ENCODE measurements at regions of chrX and their contacts with region 1.

Region 1: DNA sequence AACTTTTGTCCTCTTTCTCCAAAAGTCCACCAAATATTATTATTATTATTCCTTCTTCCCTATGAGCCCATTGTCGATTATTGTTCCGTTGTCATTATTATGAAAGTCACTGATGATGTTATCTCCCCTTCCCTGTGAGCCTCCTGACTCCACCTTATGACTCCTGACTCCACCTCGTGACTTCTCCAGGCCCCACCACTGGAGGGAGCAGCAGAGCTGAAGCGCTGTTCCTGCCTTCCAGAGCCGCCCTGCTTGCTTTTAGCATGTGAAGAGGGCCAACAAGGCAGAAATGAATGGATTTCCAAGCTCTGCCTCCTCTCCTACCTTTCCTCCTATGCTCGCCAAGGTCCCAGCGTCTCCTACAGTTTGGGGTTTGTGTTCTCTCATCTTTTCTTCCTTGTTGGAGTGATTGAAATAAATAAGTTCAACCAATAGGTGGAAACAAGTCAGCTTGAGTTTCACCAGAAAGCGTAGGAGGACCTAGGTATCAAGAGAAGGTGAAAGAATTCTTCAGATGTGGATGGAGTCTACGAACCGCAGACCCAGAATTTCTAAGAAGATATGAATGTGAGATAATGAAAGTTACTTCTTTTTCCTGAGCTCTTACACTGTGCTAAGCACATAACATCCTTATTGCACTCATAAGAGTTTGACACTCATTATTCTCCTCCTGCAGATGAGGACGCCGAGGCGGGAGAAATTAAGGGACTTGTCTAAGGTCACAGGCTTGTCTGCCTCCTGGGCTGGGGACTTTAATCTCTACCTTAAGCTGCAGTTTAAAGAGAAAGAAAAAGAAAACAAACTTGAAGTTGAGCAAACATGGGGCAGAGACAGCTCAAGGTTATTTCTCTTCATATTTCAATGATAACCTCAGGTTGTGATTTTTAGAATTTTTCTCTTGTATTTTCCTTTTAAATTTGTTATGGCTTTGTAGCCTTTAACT is 26.1 kb downstream of the IGSF1 start:
- DNase-seq: peak in 1 of 2 experiments; percentile 78
- H3K4me3 ChIP-seq: no peak overlapping the region
- H3K27ac ChIP-seq: no peak overlapping the region
- H3K4me1 ChIP-seq: no peaks in the 10 kb centered on the region
- H3K27me3 ChIP-seq: no peaks in the 10 kb centered on the region
- CTCF ChIP-seq: peak; percentile 69 to 73 (median 70)
- EP300 ChIP-seq: no peak
- POLR2A ChIP-seq: no peak
- RAD21 ChIP-seq: peak; percentile 82 to 84

Region 2: DNA sequence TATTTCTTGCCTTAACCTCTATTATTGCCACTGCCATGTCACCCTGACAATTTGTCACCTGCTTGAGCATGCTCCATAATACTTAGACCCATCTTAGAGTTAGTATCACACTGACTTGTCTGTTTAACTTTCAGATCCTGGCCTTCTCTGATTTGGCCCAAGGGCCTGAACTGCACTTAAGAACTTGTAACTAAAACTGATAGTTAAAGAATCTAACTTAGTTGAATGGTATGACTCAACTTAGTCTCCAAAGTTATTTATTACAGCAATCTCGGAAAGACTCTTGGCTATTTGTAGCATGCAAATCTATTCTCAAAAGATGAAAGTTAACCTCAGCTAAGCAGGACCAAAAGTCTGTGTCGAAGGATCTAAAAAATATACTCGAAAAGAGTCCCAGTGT is 46.2 kb before region 1 on chrX:
- CTCF ChIA-PET with region 1: no interaction called
- POLR2A ChIA-PET with region 1: no interaction called
- DNase-seq: no peak
- H3K4me3 ChIP-seq: no peak overlapping the region
- H3K27ac ChIP-seq: no peak overlapping the region
- H3K4me1 ChIP-seq: peaks cover 0 to 7% (median under 1%) of the 10 kb centered on the region in 4 experiments; a peak in 1 of 7 replicates
- H3K27me3 ChIP-seq: no peaks in the 10 kb centered on the region
- CTCF ChIP-seq: no peak
- EP300 ChIP-seq: no peak
- POLR2A ChIP-seq: no peak
- RAD21 ChIP-seq: no peak

Region 3: GRCh38 chrX:131237363-131237762 is 25.6 kb before region 1 on chrX:
- CTCF ChIA-PET with region 1: interaction called, 13 read pairs
- POLR2A ChIA-PET with region 1: no interaction called
- DNase-seq: no peak
- H3K4me3 ChIP-seq: no peak overlapping the region
- H3K27ac ChIP-seq: no peak overlapping the region
- H3K4me1 ChIP-seq: no peaks in the 10 kb centered on the region
- H3K27me3 ChIP-seq: no peaks in the 10 kb centered on the region
- CTCF ChIP-seq: peak in 1 of 3 experiments; percentile 30; a peak in 1 of 4 replicates
- EP300 ChIP-seq: no peak
- POLR2A ChIP-seq: no peak
- RAD21 ChIP-seq: peak in 1 of 2 experiments; percentile 14; a peak in 1 of 4 replicates

Region 4: GRCh38 chrX:131277547-131278136 is 14.6 kb after region 1 on chrX:
- CTCF ChIA-PET with region 1: interaction called, 19 read pairs
- POLR2A ChIA-PET with region 1: interaction called, 4 read pairs
- DNase-seq: no peak
- H3K4me3 ChIP-seq: no peak overlapping the region
- H3K27ac ChIP-seq: no peak overlapping the region
- H3K4me1 ChIP-seq: peaks cover 0 to 20% (median 2%) of the 10 kb centered on the region in 4 experiments; a peak in 4 of 7 replicates
- H3K27me3 ChIP-seq: no peaks in the 10 kb centered on the region
- CTCF ChIP-seq: no peak
- EP300 ChIP-seq: no peak
- POLR2A ChIP-seq: no peak
- RAD21 ChIP-seq: no peak

Region 5: GRCh38 chrX:131331152-131331551 is 68.1 kb after region 1 on chrX:
- CTCF ChIA-PET with region 1: interaction called, 10 read pairs
- POLR2A ChIA-PET with region 1: no interaction called
- DNase-seq: no peak
- H3K4me3 ChIP-seq: no peak overlapping the region
- H3K27ac ChIP-seq: no peak overlapping the region
- H3K4me1 ChIP-seq: no peaks in the 10 kb centered on the region
- H3K27me3 ChIP-seq: no peaks in the 10 kb centered on the region
- CTCF ChIP-seq: peak in 2 of 3 experiments; percentile 28 to 29; a peak in 2 of 4 replicates
- EP300 ChIP-seq: no peak
- POLR2A ChIP-seq: no peak
- RAD21 ChIP-seq: peak; percentile 28 to 55; a peak in 3 of 4 replicates

Region 6: GRCh38 chrX:131366407-131366806 is 103.4 kb after region 1 on chrX:
- CTCF ChIA-PET with region 1: interaction called, 27 read pairs
- POLR2A ChIA-PET with region 1: no interaction called
- DNase-seq: no peak
- H3K4me3 ChIP-seq: no peak overlapping the region
- H3K27ac ChIP-seq: no peak overlapping the region
- H3K4me1 ChIP-seq: peaks cover 0 to 15% (median 5%) of the 10 kb centered on the region in 4 experiments; a peak in 3 of 7 replicates
- H3K27me3 ChIP-seq: no peaks in the 10 kb centered on the region
- CTCF ChIP-seq: peak in 2 of 3 experiments; percentile 14 to 15; a peak in 2 of 4 replicates
- EP300 ChIP-seq: no peak
- POLR2A ChIP-seq: no peak
- RAD21 ChIP-seq: peak; percentile 25 to 46; a peak in 3 of 4 replicates

Region 7: DNA sequence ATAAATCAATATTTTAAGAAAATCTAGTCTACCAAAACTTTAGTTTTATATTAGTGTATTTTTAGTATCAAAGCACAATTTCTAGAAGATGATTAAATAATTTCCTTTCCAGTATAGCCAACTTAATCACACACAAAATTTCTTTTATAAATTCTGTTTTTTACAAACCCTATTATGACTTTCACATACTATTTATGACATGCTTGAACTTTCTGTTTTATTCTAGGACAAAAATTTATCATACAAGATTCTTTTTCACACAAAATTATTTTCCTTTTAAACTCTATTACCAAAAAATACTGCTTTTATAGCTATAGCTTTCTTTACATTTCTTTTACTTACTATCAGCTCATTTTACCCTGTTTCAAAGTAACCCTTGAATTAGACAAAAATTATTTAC is 430.4 kb after region 1 on chrX:
- CTCF ChIA-PET with region 1: no interaction called
- POLR2A ChIA-PET with region 1: no interaction called
- DNase-seq: no peak
- H3K4me3 ChIP-seq: no peak overlapping the region
- H3K27ac ChIP-seq: no peak overlapping the region
- H3K4me1 ChIP-seq: no peaks in the 10 kb centered on the region
- H3K27me3 ChIP-seq: no peaks in the 10 kb centered on the region
- CTCF ChIP-seq: no peak
- EP300 ChIP-seq: no peak
- POLR2A ChIP-seq: no peak
- RAD21 ChIP-seq: no peak